WTC11 (cell line): ENCODE measurements at regions of chr5 and their contacts with region 1.

Region 1: DNA sequence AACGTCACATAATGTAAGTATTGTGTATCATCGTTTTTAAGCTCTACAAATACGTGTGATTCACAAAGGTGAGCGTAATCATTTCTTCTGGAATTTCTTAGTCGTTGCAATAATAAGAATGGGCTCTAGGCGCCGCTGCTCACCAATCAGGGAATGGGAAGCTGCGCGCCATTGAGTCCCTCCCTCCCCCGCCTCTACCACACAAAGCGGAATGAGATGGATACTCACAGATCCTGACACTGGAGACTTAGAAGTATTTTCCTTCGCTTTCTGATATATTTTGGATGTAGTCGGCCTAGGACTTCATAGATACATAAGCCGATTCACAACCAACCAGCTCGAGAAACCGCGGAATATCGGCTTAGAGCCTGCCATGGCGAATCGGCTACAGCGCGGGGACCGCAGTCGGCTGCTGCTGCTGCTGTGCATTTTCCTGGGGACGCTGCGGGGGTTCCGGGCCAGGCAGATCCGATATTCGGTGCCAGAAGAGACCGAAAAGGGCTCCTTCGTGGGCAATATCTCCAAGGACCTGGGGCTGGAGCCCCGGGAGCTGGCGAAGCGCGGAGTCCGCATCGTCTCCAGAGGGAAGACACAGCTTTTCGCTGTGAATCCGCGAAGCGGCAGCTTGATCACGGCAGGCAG is at the start of gene PCDHGA11:
- DNase-seq: peak; percentile 77
- ATAC-seq: peak; percentile 52
- H3K4me3 Mint-ChIP-seq: peak within 1 kb of the TSS; percentile 81
- H3K27ac Mint-ChIP-seq: peak within 1 kb of the TSS; percentile 47
- H3K4me1 Mint-ChIP-seq: peaks cover 26% of the 10 kb centered on the region
- H3K27me3 Mint-ChIP-seq: peaks cover 14% of the 10 kb centered on the region
- CTCF ChIP-seq: peak; percentile 68
- total RNA-seq, gene PCDHGA11: 7.0 to 8.4 TPM (median 7.1 TPM) in 3 replicates

Region 2: GRCh38 chr5:141298376-141298775 is 122.6 kb before region 1 on chr5:
- CTCF ChIA-PET with region 1: no interaction called
- POLR2A ChIA-PET with region 1: no interaction called
- DNase-seq: no peak
- ATAC-seq: no peak
- H3K4me3 Mint-ChIP-seq: no peak overlapping the region
- H3K27ac Mint-ChIP-seq: no peak overlapping the region
- H3K4me1 Mint-ChIP-seq: no peaks in the 10 kb centered on the region
- H3K27me3 Mint-ChIP-seq: no peaks in the 10 kb centered on the region
- CTCF ChIP-seq: no peak

Region 3: GRCh38 chr5:141387233-141387949 is 33.6 kb before region 1 on chr5 and contains the start of gene PCDHGB4:
- CTCF ChIA-PET with region 1: interaction called, 11 read pairs
- POLR2A ChIA-PET with region 1: no interaction called
- DNase-seq: peak; percentile 80
- ATAC-seq: peak; percentile 96
- H3K4me3 Mint-ChIP-seq: peak within 1 kb of the TSS; percentile 81
- H3K27ac Mint-ChIP-seq: no peak within 1 kb of the TSS
- H3K4me1 Mint-ChIP-seq: 0 out of 2 replicates have a peak, but pooled peaks cover 3% of the 10 kb centered on the region
- H3K27me3 Mint-ChIP-seq: peaks cover 37% of the 10 kb centered on the region
- CTCF ChIP-seq: peak; percentile 48; the same call in 1 of the 2 replicates
- total RNA-seq, gene PCDHGB4: 7.8 to 9.1 TPM (median 8.8 TPM) in 3 replicates

Region 4: GRCh38 chr5:141484641-141485311 is 63.8 kb after region 1 on chr5 and contains the start of gene PCDHGC4:
- CTCF ChIA-PET with region 1: interaction called, 26 read pairs
- POLR2A ChIA-PET with region 1: no interaction called
- DNase-seq: peak; percentile 84
- ATAC-seq: peak; percentile 89
- H3K4me3 Mint-ChIP-seq: peak within 1 kb of the TSS; percentile 71
- H3K27ac Mint-ChIP-seq: peak within 1 kb of the TSS; percentile 90
- H3K4me1 Mint-ChIP-seq: peaks cover 60% of the 10 kb centered on the region
- H3K27me3 Mint-ChIP-seq: peaks cover 33% of the 10 kb centered on the region
- CTCF ChIP-seq: no peak
- total RNA-seq, gene PCDHGC4: 4.5 to 6.1 TPM (median 5.1 TPM) in 3 replicates

Region 5: DNA sequence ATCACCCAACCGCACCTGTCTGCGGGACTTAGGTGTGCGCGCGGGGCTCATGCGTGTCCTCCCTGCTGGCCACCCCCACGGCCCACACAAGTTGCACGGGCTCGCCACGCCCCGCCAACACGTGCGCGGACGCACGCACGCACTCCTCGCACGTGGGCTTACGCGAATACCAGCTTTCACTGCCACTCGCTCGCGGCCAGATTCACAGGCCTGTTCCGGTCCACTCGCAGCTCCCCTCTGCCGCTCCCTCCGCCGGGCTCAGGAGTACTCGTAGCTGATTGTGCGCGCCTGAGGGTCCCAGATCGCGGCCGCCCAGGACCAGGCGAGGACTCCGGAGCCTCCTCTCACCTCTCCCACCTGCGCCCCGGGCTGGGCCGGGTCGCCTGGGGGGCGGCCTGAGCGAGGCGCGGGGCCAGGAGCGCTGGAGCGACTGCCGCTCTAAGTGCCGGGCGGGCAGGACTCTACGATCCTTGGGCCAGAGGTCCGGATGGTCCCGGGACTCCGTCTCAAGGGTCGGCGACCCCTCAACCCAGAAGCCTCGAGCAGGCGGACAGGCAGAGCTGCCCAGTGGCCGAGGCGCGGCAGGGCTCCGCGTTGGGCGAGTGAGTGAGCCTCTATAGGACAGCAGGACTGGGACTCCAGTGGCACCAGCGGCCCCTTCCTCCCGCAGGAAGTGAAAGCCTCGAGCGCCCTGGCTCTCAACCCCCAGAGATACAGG is 71.4 kb after region 1 on chr5:
- CTCF ChIA-PET with region 1: interaction called, 22 read pairs
- POLR2A ChIA-PET with region 1: interaction called, 4 read pairs
- DNase-seq: peak; percentile 49
- ATAC-seq: peak; percentile 10
- H3K4me3 Mint-ChIP-seq: peak overlapping the region; percentile 66
- H3K27ac Mint-ChIP-seq: no peak overlapping the region
- H3K4me1 Mint-ChIP-seq: peaks cover 57% of the 10 kb centered on the region
- H3K27me3 Mint-ChIP-seq: peaks cover 52% of the 10 kb centered on the region
- CTCF ChIP-seq: no peak